IMR-90 (cell line): ENCODE measurements at regions of chr2 and their contacts with region 1.

Region 1: DNA sequence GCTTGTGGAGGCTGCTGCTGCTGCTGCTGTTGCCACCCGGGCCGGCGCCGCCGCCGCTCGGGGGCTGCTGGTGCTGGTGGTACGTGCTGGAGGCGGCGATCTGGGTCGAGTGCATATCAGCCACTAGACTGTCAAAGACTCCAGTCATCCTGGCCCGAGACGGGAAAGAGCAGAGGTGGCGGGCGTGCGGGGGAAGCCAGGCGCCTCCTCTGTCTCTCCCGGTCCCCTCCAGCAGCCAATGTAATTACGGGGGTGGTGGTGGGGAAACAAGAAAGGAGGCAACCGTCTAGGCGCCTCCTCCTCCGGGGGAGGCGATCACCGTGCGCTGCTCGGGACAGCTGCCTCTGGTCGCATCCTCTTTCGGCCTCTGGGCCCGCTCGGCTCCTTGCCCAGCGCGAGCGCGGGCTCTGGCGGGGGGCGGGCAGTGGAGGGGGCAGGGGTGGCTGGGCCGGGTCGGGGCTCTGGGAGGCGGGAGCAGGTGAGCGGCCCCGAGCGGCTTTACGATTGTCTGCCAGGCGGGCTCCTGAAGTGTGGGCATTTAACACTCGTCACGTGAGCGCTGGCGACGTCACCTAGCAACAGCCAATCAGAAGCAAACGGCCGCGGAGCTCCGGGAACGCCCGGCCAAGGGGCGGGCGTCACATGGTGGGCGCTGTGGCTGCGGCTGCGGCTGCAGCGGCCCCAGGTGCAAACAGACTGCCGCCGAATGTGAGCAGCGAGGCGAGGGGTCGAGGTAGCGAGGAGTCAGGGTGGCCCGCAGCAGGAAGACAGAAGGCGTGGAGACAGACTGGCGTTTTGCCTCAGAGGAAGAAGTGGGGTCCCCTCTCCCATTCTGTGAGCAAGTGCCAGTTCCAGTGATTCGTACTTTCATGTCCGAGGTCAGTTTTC is at the start of gene DLX2:
- DNase-seq: peak; percentile 86
- ATAC-seq: peak; percentile 58
- H3K4me3 ChIP-seq: peak within 1 kb of the TSS; percentile 54
- H3K27ac ChIP-seq: peak within 1 kb of the TSS; percentile 32; the same call in 1 of the 2 replicates
- H3K4me1 ChIP-seq: peaks cover 9% of the 10 kb centered on the region
- H3K27me3 ChIP-seq: no peaks in the 10 kb centered on the region; the same call in 1 of the 2 replicates
- CTCF ChIP-seq: no peak
- POLR2A ChIP-seq: peak; percentile 44; the same call in 1 of the 2 replicates
- RAD21 ChIP-seq: 0 out of 2 replicates have a peak, but pooled peaks have one; percentile 6
- total RNA-seq, gene DLX2: not detected in 2 replicates

Region 2: GRCh38 chr2:171574149-171574795 is 528.4 kb before region 1 on chr2:
- CTCF ChIA-PET with region 1: interaction called, 4 read pairs
- POLR2A ChIA-PET with region 1: no interaction called
- dilution Hi-C with region 1: no loop called
- in situ Hi-C with region 1: no loop called
- intact Hi-C with region 1: loop called (anchors 1 kb)
- DNase-seq: peak; percentile 68
- ATAC-seq: peak; percentile 100
- H3K4me3 ChIP-seq: no peak overlapping the region
- H3K27ac ChIP-seq: no peak overlapping the region
- H3K4me1 ChIP-seq: no peaks in the 10 kb centered on the region
- H3K27me3 ChIP-seq: 0 out of 2 replicates have a peak, but pooled peaks cover 5% of the 10 kb centered on the region
- CTCF ChIP-seq: peak; percentile 98
- POLR2A ChIP-seq: peak; percentile 66
- RAD21 ChIP-seq: peak; percentile 98

Region 3: GRCh38 chr2:171703574-171704347 is 398.9 kb before region 1 on chr2:
- CTCF ChIA-PET with region 1: interaction called, 9 read pairs
- POLR2A ChIA-PET with region 1: no interaction called
- dilution Hi-C with region 1: no loop called
- in situ Hi-C with region 1: loop called (anchors 5 kb)
- intact Hi-C with region 1: loop called (anchors 1 kb)
- DNase-seq: peak; percentile 56
- ATAC-seq: peak; percentile 68
- H3K4me3 ChIP-seq: no peak overlapping the region
- H3K27ac ChIP-seq: no peak overlapping the region
- H3K4me1 ChIP-seq: peaks cover 5% of the 10 kb centered on the region
- H3K27me3 ChIP-seq: no peaks in the 10 kb centered on the region
- CTCF ChIP-seq: peak; percentile 66
- POLR2A ChIP-seq: no peak
- RAD21 ChIP-seq: peak; percentile 72

Region 4: GRCh38 chr2:171811245-171811628 is 291.4 kb before region 1 on chr2:
- CTCF ChIA-PET with region 1: interaction called, 7 read pairs
- POLR2A ChIA-PET with region 1: no interaction called
- dilution Hi-C with region 1: no loop called
- in situ Hi-C with region 1: loop called (anchors 5 kb)
- intact Hi-C with region 1: loop called (anchors 1 kb)
- DNase-seq: peak; percentile 57
- ATAC-seq: peak; percentile 69
- H3K4me3 ChIP-seq: no peak overlapping the region
- H3K27ac ChIP-seq: no peak overlapping the region
- H3K4me1 ChIP-seq: peaks cover 6% of the 10 kb centered on the region; the same call in 1 of the 2 replicates
- H3K27me3 ChIP-seq: no peaks in the 10 kb centered on the region
- CTCF ChIP-seq: peak; percentile 56
- POLR2A ChIP-seq: no peak
- RAD21 ChIP-seq: peak; percentile 71

Region 5: GRCh38 chr2:171922230-171923022 is 180.2 kb before region 1 on chr2 and contains the start of gene HAT1:
- CTCF ChIA-PET with region 1: interaction called, 3 read pairs
- POLR2A ChIA-PET with region 1: no interaction called
- dilution Hi-C with region 1: no loop called
- in situ Hi-C with region 1: no loop called
- intact Hi-C with region 1: loop called (anchors 2 kb)
- DNase-seq: peak; percentile 98
- ATAC-seq: peak; percentile 98
- H3K4me3 ChIP-seq: peak within 1 kb of the TSS; percentile 71
- H3K27ac ChIP-seq: peak within 1 kb of the TSS; percentile 65
- H3K4me1 ChIP-seq: no peaks in the 10 kb centered on the region
- H3K27me3 ChIP-seq: no peaks in the 10 kb centered on the region
- CTCF ChIP-seq: no peak
- POLR2A ChIP-seq: peak; percentile 74
- RAD21 ChIP-seq: no peak
- total RNA-seq, gene HAT1: 24.4 and 49.2 TPM in 2 replicates

Region 6: DNA sequence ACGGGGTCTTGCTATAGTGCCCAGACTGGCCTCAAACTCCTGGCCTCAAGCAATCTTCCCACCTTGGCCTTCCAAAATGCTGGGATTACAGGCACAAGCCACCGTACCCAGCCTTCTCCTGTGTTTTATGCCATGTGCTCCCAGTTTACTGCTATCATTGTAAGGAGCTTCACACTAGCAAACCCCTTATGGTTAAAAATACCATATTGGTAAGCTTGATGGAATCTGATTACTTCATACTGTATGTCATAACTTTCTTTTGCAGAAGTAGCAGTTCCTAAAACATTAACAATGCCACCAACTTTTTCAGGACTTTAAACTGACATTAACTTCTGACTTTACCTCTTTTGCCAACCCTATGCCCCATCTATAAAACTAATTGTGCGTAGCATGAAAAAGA is 144.2 kb before region 1 on chr2:
- CTCF ChIA-PET with region 1: no interaction called
- POLR2A ChIA-PET with region 1: no interaction called
- dilution Hi-C with region 1: no loop called
- in situ Hi-C with region 1: no loop called
- intact Hi-C with region 1: loop called (anchors 2 kb)
- DNase-seq: peak; percentile 85
- ATAC-seq: peak; percentile 73
- H3K4me3 ChIP-seq: no peak overlapping the region
- H3K27ac ChIP-seq: peak overlapping the region; percentile 59; the same call in 1 of the 2 replicates
- H3K4me1 ChIP-seq: peaks cover 15% of the 10 kb centered on the region
- H3K27me3 ChIP-seq: no peaks in the 10 kb centered on the region
- CTCF ChIP-seq: no peak
- POLR2A ChIP-seq: no peak
- RAD21 ChIP-seq: no peak